Endothelial cell of umbilical vein (primary cell): ENCODE measurements at regions of chrX and their contacts with region 1.

Region 1: GRCh38 chrX:51641421-51642021 is 22.8 kb upstream of the CENPVL3 start:
- DNase-seq: peak; percentile 26
- H3K4me3 ChIP-seq: no peak overlapping the region
- H3K27ac ChIP-seq: no peak overlapping the region
- H3K4me1 ChIP-seq: no peaks in the 10 kb centered on the region
- H3K27me3 ChIP-seq: no peaks in the 10 kb centered on the region
- CTCF ChIP-seq: peak; percentile 16 to 23
- POLR2A ChIP-seq: no peak

Region 2: DNA sequence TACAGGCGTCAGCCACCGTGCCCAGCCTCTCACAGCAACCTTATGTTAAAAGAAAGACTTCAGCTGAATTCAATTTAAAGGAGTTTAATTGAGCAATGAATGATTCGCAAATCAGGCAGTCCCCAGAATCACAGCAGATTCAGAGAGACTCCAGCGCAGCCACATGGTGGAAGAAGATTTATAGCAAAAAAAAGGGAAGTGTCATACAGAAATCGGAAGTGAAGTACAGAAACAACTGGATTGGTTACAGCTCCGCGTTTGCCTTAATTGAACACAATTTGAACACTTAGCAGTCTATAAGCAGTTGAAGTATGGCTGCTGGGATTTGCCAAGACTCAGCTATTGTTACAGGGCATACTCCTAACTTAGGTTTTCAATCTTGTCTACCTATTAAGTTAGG is 42.6 kb before region 1 on chrX:
- CTCF ChIA-PET with region 1: no interaction called
- POLR2A ChIA-PET with region 1: no interaction called
- dilution Hi-C with region 1: no loop called
- intact Hi-C with region 1: no loop called
- DNase-seq: no peak
- H3K4me3 ChIP-seq: no peak overlapping the region
- H3K27ac ChIP-seq: no peak overlapping the region
- H3K4me1 ChIP-seq: no peaks in the 10 kb centered on the region
- H3K27me3 ChIP-seq: no peaks in the 10 kb centered on the region
- CTCF ChIP-seq: no peak
- POLR2A ChIP-seq: no peak

Region 3: GRCh38 chrX:51860679-51861078 is 219.2 kb after region 1 on chrX:
- CTCF ChIA-PET with region 1: interaction called, 31 read pairs
- POLR2A ChIA-PET with region 1: no interaction called
- dilution Hi-C with region 1: no loop called
- intact Hi-C with region 1: loop called (anchors 1 kb)
- DNase-seq: peak; percentile 22
- H3K4me3 ChIP-seq: no peak overlapping the region
- H3K27ac ChIP-seq: no peak overlapping the region
- H3K4me1 ChIP-seq: no peaks in the 10 kb centered on the region
- H3K27me3 ChIP-seq: no peaks in the 10 kb centered on the region
- CTCF ChIP-seq: peak; percentile 17 to 63
- POLR2A ChIP-seq: no peak

Region 4: GRCh38 chrX:52261463-52262194 is 620.1 kb after region 1 on chrX:
- CTCF ChIA-PET with region 1: interaction called, 14 read pairs
- POLR2A ChIA-PET with region 1: no interaction called
- dilution Hi-C with region 1: no loop called
- intact Hi-C with region 1: loop called (anchors 5 kb)
- DNase-seq: peak; percentile 76
- H3K4me3 ChIP-seq: peak overlapping the region; percentile 26 to 67 (median 51)
- H3K27ac ChIP-seq: peak overlapping the region; percentile 61
- H3K4me1 ChIP-seq: no peaks in the 10 kb centered on the region
- H3K27me3 ChIP-seq: no peaks in the 10 kb centered on the region
- CTCF ChIP-seq: peak; percentile 65 to 68
- POLR2A ChIP-seq: peak; percentile 73